Activated CD4-positive, alpha-beta T cell treated with anti-CD3 and anti-CD28 coated beads, Interleukin-2, amount 10 ng/mL, durations not matched to agents 24 days and 14 days (primary cell): ENCODE measurements at regions of chr1 and their contacts with region 1.

Region 1: DNA sequence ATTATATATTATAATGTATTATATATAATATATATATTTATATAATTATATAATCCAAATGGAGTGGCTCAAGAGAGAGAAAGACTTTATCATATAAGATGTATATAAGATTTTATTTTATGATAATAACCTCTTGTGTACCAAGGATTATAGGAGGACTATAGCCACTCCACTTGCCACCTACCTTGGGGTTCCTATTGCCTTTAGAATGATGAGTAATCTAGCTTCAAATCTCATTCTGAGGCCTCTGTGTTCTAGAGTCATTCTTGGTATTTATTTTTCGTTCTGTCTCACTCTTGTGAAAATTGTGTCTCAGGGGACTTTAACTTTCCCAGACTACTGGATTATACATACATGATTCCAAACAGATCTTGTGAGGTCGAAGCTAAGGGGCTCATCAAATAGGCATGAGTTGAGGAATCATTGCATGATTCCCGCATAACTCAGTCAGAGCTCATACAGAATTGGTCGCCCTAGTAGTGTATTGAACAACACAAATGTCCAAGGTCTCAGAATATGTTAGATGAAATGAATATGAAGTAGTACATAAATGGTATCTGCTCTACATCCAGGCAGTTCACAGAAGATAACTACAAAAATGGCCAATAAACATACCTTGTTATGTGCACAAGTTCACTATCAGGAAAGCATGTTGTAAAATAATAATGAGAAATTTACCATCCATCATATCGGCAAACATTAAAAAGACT is 159.5 kb upstream of the RNPC3 start:
- DNase-seq: no peak
- H3K4me3 Mint-ChIP-seq: no peak overlapping the region
- H3K27ac Mint-ChIP-seq: peak overlapping the region; percentile 10
- H3K4me1 Mint-ChIP-seq: no peaks in the 10 kb centered on the region
- H3K27me3 Mint-ChIP-seq: no peaks in the 10 kb centered on the region

Region 2: GRCh38 chr1:103025858-103026409 is 340.1 kb before region 1 on chr1:
- intact Hi-C with region 1: no loop called
- DNase-seq: no peak
- H3K4me3 Mint-ChIP-seq: no peak overlapping the region
- H3K27ac Mint-ChIP-seq: no peak overlapping the region
- H3K4me1 Mint-ChIP-seq: no peaks in the 10 kb centered on the region
- H3K27me3 Mint-ChIP-seq: no peaks in the 10 kb centered on the region

Region 3: GRCh38 chr1:103353391-103353790 is 12.6 kb before region 1 on chr1:
- intact Hi-C with region 1: loop called (anchors 1 kb)
- DNase-seq: no peak
- H3K4me3 Mint-ChIP-seq: no peak overlapping the region
- H3K27ac Mint-ChIP-seq: no peak overlapping the region
- H3K4me1 Mint-ChIP-seq: no peaks in the 10 kb centered on the region
- H3K27me3 Mint-ChIP-seq: no peaks in the 10 kb centered on the region